Naive thymus-derived CD4-positive, alpha-beta T cell (primary cell): ENCODE measurements at regions of chr14 and their contacts with region 1.

Region 1: GRCh38 chr14:81220830-81221578 is at the start of gene GTF2A1:
- DNase-seq: peak; percentile 92 to 96 (median 94)
- ATAC-seq: peak; percentile 84
- H3K4me3 ChIP-seq: peak within 1 kb of the TSS; percentile 94
- H3K4me3 Mint-ChIP-seq: peak within 1 kb of the TSS; percentile 92 to 100 (median 99)
- H3K27ac ChIP-seq: peak within 1 kb of the TSS; percentile 97
- H3K27ac Mint-ChIP-seq: peak within 1 kb of the TSS; percentile 98 to 100 (median 100)
- H3K4me1 ChIP-seq: peaks cover 22 to 28% of the 10 kb centered on the region in 2 donors
- H3K4me1 Mint-ChIP-seq: peaks cover 16 to 47% (median 33%) of the 10 kb centered on the region in 7 donors
- H3K27me3 ChIP-seq: no peaks in the 10 kb centered on the region
- H3K27me3 Mint-ChIP-seq: peaks cover 0 to 11% (median 0%) of the 10 kb centered on the region in 5 donors
- total RNA-seq, gene GTF2A1: 21.5 to 39.2 (median 33.7) TPM

Region 2: GRCh38 chr14:80941241-80942182 is 279.5 kb before region 1 on chr14 and contains the start of gene CEP128:
- CTCF ChIA-PET with region 1: no interaction called
- POLR2A ChIA-PET with region 1: interaction called, 7 read pairs
- intact Hi-C with region 1: loop called (anchors 1 kb)
- DNase-seq: peak; percentile 30 to 82 (median 61)
- ATAC-seq: peak; percentile 93
- H3K4me3 ChIP-seq: peak within 1 kb of the TSS; percentile 78
- H3K4me3 Mint-ChIP-seq: peak within 1 kb of the TSS; percentile 84 to 93 (median 89)
- H3K27ac ChIP-seq: peak within 1 kb of the TSS; percentile 44
- H3K27ac Mint-ChIP-seq: peak within 1 kb of the TSS; percentile 52 to 89 (median 78)
- H3K4me1 ChIP-seq: peaks cover 10 to 11% of the 10 kb centered on the region in 2 donors
- H3K4me1 Mint-ChIP-seq: peaks cover 18 to 33% (median 20%) of the 10 kb centered on the region in 7 donors
- H3K27me3 ChIP-seq: no peaks in the 10 kb centered on the region
- H3K27me3 Mint-ChIP-seq: peaks cover 0 to 6% (median 4%) of the 10 kb centered on the region in 5 donors
- total RNA-seq, gene CEP128: 7.7 to 22.8 (median 10.1) TPM

Region 3: GRCh38 chr14:81200054-81200453 is 20.9 kb before region 1 on chr14:
- CTCF ChIA-PET with region 1: no interaction called
- POLR2A ChIA-PET with region 1: interaction called, 19 read pairs
- intact Hi-C with region 1: loop called (anchors 1 to 2 kb)
- DNase-seq: no peak
- ATAC-seq: peak; percentile 71
- H3K4me3 ChIP-seq: no peak overlapping the region
- H3K4me3 Mint-ChIP-seq: peak overlapping the region in 7 of 10 donors; percentile 12 to 48 (median 24)
- H3K27ac ChIP-seq: no peak overlapping the region
- H3K27ac Mint-ChIP-seq: peak overlapping the region in 8 of 9 donors; percentile 32 to 78 (median 50)
- H3K4me1 ChIP-seq: peaks cover 4 to 5% of the 10 kb centered on the region in 2 donors
- H3K4me1 Mint-ChIP-seq: peaks cover 10 to 54% (median 23%) of the 10 kb centered on the region in 7 donors
- H3K27me3 ChIP-seq: no peaks in the 10 kb centered on the region
- H3K27me3 Mint-ChIP-seq: no peaks in the 10 kb centered on the region

Region 4: GRCh38 chr14:81295958-81296923 is 75.2 kb after region 1 on chr14:
- CTCF ChIA-PET with region 1: no interaction called
- POLR2A ChIA-PET with region 1: no interaction called
- intact Hi-C with region 1: no loop called
- DNase-seq: no peak
- ATAC-seq: peak; percentile 68
- H3K4me3 ChIP-seq: no peak overlapping the region
- H3K4me3 Mint-ChIP-seq: no peak overlapping the region
- H3K27ac ChIP-seq: no peak overlapping the region
- H3K27ac Mint-ChIP-seq: no peak overlapping the region
- H3K4me1 ChIP-seq: no peaks in the 10 kb centered on the region
- H3K4me1 Mint-ChIP-seq: no peaks in the 10 kb centered on the region
- H3K27me3 ChIP-seq: no peaks in the 10 kb centered on the region
- H3K27me3 Mint-ChIP-seq: peaks cover 0 to 4% (median 0%) of the 10 kb centered on the region in 5 donors

Region 5: GRCh38 chr14:81464247-81465002 is 243.4 kb after region 1 on chr14:
- CTCF ChIA-PET with region 1: interaction called, 3 read pairs
- POLR2A ChIA-PET with region 1: interaction called, 4 read pairs
- intact Hi-C with region 1: loop called (anchors 1 to 2 kb)
- DNase-seq: peak; percentile 15 to 86 (median 75)
- ATAC-seq: peak; percentile 90
- H3K4me3 ChIP-seq: peak overlapping the region; percentile 85
- H3K4me3 Mint-ChIP-seq: peak overlapping the region; percentile 76 to 91 (median 88)
- H3K27ac ChIP-seq: peak overlapping the region; percentile 76
- H3K27ac Mint-ChIP-seq: peak overlapping the region; percentile 70 to 98 (median 91)
- H3K4me1 ChIP-seq: no peaks in the 10 kb centered on the region
- H3K4me1 Mint-ChIP-seq: peaks cover 0 to 14% (median 8%) of the 10 kb centered on the region in 7 donors
- H3K27me3 ChIP-seq: no peaks in the 10 kb centered on the region
- H3K27me3 Mint-ChIP-seq: no peaks in the 10 kb centered on the region

Region 6: GRCh38 chr14:81533536-81534343 is 312.7 kb after region 1 on chr14 and contains the start of gene SEL1L:
- CTCF ChIA-PET with region 1: no interaction called
- POLR2A ChIA-PET with region 1: interaction called, 18 read pairs
- intact Hi-C with region 1: loop called (anchors 1 kb)
- DNase-seq: peak; percentile 98 to 100 (median 99)
- ATAC-seq: peak; percentile 96
- H3K4me3 ChIP-seq: peak within 1 kb of the TSS; percentile 87
- H3K4me3 Mint-ChIP-seq: peak within 1 kb of the TSS; percentile 85 to 98 (median 96)
- H3K27ac ChIP-seq: peak within 1 kb of the TSS; percentile 77
- H3K27ac Mint-ChIP-seq: peak within 1 kb of the TSS; percentile 81 to 97 (median 92)
- H3K4me1 ChIP-seq: peaks cover 24% of the 10 kb centered on the region in 2 donors
- H3K4me1 Mint-ChIP-seq: peaks cover 33 to 71% (median 68%) of the 10 kb centered on the region in 7 donors
- H3K27me3 ChIP-seq: no peaks in the 10 kb centered on the region
- H3K27me3 Mint-ChIP-seq: peaks cover 0 to 3% (median under 1%) of the 10 kb centered on the region in 5 donors
- total RNA-seq, gene SEL1L: 43.5 to 72.2 (median 57.0) TPM